GM10248 (cell line): ENCODE measurements at regions of chr15 and their contacts with region 1.

Region 1: DNA sequence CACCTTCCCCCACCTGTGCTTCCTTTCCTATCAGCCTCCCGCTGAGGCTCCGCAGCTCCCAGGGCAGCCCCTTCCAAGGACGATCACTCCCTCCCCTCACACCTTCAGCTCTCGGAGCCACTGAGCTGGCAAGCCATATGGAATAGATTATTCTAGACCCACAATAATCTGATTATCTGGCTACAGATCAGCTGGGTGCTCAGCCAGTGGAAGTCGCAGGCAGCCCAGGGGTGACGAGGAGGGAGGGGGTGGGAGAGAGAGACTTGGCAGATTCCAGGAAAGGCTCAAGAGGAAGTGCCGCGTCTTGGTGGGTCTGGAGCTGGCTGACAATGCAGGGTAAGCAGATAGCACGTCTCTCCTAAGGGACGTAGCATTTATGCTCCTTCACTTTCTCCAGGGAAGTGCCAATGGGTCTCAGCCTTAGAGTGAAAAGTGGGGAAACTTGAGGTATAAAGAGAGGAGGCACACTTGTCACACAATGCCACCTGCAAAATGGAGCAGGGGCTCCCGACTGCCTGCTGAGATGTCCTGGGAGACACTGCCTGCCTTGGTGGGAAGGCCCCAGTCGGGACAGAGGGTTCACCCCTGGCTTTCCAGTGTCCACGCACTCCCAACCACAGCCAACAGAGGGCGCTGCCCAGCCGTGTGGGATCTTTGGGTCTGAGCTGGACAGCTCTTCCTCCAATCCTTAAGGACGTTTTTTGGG is 9.4 kb upstream of the MESP1 start:
- DNase-seq: peak; percentile 88
- CTCF ChIP-seq: peak; percentile 100

Region 2: DNA sequence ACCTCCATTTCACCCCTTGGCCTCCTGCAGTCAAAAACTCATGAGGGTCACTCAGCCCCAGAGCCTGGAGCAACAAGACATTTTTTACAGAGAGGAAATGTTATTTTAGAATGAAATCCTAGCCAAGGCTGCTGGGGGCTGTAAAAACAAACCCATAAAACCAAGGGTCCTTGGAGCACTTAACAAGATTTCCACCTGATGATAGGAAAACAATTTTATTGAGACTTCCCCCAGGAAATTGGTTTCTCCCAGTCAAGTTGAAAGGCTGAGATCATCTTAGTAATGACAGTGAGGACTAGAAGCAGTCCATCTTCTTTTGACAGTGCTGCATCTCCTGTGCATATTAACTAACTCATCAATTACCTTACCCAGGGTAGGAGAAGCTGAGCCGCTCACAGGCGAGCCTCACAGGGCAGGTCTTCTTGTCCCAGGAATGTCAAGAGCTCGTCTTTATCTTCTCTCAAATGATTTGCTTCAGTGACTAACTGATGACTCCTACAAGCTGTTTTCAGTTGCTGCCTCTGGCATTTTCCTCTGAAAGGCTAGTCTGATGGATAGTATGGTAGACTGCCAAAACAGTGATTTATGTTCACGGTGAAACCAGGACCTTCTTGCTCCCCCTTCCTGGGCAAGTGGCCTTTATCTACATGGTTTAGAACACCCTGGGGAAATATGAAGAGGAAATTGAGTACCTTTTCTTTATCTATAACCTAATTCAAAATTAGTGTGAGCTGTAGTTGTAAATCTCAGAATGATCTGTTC is 1173.9 kb before region 1 on chr15:
- CTCF ChIA-PET with region 1: no interaction called
- POLR2A ChIA-PET with region 1: no interaction called
- DNase-seq: no peak
- CTCF ChIP-seq: no peak

Region 3: GRCh38 chr15:89654847-89655805 is 105.3 kb before region 1 on chr15 and contains the start of gene KIF7:
- CTCF ChIA-PET with region 1: no interaction called
- POLR2A ChIA-PET with region 1: no interaction called
- DNase-seq: peak; percentile 59
- CTCF ChIP-seq: no peak

Region 4: DNA sequence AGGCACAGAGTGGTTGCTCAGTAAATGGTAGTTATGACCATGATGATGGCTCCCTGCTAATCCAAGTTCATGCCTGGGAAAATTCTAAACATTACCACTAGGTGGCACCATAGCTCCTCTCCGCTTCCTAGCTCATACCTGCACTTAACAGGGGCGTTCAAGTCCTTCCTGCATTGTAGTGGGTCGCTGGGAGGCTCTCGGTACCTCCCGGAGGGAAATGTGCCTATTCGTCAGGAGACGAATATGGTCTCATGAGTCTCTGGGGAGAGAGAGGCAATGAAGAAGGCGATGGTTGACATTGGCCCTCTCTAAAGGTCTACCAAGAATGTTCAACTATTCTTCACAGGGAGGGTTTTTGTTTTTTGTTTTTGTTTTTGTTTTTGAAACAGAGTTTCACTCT is 20.3 kb before region 1 on chr15:
- CTCF ChIA-PET with region 1: interaction called, 14 read pairs
- POLR2A ChIA-PET with region 1: no interaction called
- DNase-seq: peak; percentile 81
- CTCF ChIP-seq: peak; percentile 79

Region 5: DNA sequence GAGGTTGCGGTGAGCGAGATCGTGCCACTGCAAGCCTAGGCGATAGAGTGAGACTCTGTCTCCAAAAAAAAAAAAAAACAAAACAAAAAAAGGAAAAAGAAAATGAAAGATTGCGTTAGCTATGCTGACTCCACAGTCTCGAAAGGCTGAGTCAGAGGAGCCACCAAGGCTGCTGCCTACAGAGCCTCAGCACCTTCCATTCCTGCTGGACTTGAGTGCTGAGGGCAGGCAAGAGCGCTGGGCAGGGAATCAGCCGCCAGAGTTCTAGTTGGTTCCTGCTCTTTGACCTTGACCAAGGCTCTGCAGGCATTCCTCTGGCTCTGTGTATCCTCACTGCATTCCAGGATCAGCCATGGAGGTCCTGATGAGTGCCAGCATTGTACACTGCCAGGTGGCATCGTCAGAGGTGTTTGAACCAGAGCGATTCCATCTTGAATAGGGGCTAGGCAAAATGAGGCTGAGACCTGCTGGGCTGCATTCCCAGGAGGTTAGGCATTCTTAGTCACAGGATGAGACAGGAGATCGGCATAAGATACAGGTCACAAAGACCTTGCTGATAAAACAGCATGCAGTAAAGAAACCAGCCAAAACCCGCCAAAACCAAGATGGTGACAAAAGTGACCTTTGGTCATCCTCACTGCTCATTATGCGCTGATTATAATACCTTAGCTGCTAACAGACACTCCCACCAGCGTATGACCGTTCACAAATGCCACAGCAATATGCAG is 21.6 kb after region 1 on chr15:
- CTCF ChIA-PET with region 1: interaction called, 30 read pairs
- POLR2A ChIA-PET with region 1: no interaction called
- DNase-seq: no peak
- CTCF ChIP-seq: no peak

Region 6: DNA sequence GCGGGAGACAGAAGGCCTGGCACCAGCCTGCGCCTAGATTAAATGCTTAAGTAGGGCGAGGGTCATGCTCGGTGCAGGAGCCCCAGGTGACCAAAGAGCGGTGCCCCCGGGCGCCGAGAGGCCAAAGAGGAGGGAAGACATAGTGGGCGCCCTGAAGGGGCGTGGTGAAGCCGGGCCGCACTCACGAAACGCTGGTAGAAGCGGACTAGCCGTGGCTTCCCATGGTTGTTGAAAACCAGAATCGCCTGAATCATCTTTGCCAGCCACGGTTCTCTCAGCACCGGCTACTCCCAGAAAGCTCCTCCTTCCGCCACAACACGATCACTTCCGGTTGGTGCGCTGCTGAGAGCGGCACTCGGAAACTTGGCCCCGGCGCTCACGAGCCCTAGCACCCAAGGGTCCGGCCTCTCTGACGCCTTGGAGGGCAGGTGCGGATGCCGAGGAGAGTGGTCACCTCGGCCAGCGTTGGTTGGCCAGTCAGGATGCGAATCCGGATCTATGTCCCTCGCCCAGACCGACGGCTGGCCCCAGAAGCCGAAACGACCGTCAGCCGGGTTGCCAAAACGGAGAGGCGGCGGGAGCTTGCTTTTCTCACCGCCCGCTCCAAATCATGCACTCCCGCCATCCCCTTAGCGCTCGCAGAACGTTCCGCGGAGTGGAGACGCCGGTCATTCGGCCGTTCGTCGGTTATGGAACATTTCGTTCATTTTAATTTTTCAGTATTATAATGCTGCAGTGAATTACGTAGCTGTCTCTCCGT is 133.4 kb after region 1 on chr15 and contains the start of gene AP3S2:
- CTCF ChIA-PET with region 1: interaction called, 60 read pairs
- POLR2A ChIA-PET with region 1: no interaction called
- DNase-seq: peak; percentile 88
- CTCF ChIP-seq: no peak

Region 7: GRCh38 chr15:90071208-90071807 is 310.9 kb after region 1 on chr15:
- CTCF ChIA-PET with region 1: interaction called, 26 read pairs
- POLR2A ChIA-PET with region 1: no interaction called
- DNase-seq: peak; percentile 77
- CTCF ChIP-seq: peak; percentile 76